Ovary (tissue), 10 donors: ENCODE measurements at regions of chr1 and their contacts with region 1.

Region 1: DNA sequence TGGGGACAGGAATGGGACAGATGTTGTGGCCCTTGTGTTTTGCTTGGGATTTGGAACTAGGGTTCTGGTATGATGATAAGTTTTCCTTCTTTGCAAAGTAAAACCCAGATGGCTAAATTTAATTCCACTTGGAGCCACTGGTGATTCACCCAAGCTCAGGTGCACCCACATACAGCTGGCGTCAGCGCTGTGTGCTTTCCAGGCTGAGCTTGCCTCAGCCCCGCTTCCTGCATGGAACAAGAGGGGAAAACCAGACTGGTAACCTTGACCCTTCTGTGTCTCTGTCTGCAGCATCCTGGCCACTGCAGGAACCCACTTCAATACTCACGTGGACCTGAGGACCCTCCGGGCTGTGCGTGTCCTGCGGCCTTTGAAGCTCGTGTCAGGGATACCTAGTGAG is 94.2 kb downstream of the CACNA1E start:
- DNase-seq: no peak
- H3K4me3 ChIP-seq: no peak overlapping the region
- H3K27ac ChIP-seq: no peak overlapping the region
- H3K4me1 ChIP-seq: no peaks in the 10 kb centered on the region
- H3K27me3 ChIP-seq: no peaks in the 10 kb centered on the region
- CTCF ChIP-seq: no peak
- EP300 ChIP-seq: no peak
- POLR2A ChIP-seq: no peak

Region 2: DNA sequence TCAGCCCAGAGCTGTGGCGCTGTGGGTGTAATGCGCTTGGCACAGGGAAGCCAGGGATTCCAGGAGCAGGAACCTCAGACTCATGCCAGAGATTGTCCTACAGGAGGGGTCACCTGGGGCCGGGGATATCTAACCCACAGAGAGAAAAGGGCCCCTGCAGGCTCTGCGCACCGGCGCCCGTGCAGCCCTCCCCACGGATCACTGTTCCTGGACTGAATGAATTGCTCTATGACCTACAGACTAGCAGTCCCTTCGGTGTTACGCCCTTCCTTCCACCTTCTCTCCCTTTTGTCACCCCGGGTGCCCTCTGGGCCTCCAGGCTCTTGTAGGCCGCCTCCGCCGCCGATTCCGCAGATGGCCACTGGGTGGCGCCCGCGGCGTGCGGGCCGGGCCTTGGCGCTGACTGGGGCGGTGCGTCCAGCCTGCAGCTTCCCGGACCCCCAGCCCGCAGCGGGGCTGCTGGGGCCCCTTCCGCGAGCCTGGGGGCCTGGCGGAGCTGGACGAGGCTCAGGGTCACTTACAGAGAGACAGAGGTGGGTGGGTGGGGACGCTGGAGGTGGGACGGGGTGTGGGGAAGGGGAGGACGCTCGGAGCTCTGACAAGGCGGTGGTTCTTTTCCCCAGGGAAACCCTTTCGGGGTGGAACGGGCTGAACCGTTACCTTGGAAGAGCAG is 387.6 kb before region 1 on chr1:
- intact Hi-C with region 1: no loop called
- DNase-seq: peak in 4 of 5 donors; percentile 19 to 75 (median 52)
- H3K4me3 ChIP-seq: peak overlapping the region; percentile 23
- H3K27ac ChIP-seq: no peak overlapping the region
- H3K4me1 ChIP-seq: peaks cover 1% of the 10 kb centered on the region
- H3K27me3 ChIP-seq: no peaks in the 10 kb centered on the region
- CTCF ChIP-seq: peak; percentile 29 to 66 (median 44)
- EP300 ChIP-seq: no peak
- POLR2A ChIP-seq: no peak

Region 3: GRCh38 chr1:181514298-181515290 is 62.9 kb before region 1 on chr1:
- intact Hi-C with region 1: loop called in 1 of 4 experiments (anchors 10 kb)
- DNase-seq: no peak
- H3K4me3 ChIP-seq: no peak overlapping the region
- H3K27ac ChIP-seq: no peak overlapping the region
- H3K4me1 ChIP-seq: no peaks in the 10 kb centered on the region
- H3K27me3 ChIP-seq: no peaks in the 10 kb centered on the region
- CTCF ChIP-seq: no peak
- EP300 ChIP-seq: no peak
- POLR2A ChIP-seq: no peak